CD8-positive, alpha-beta T cell (primary cell): ENCODE measurements at regions of chr9 and their contacts with region 1.

Region 1: GRCh38 chr9:24776226-24776625 is 230.5 kb upstream of the IZUMO3 start:
- DNase-seq: no peak
- ATAC-seq: no peak
- H3K4me3 ChIP-seq: no peak overlapping the region
- H3K4me3 Mint-ChIP-seq: no peak overlapping the region
- H3K27ac ChIP-seq: no peak overlapping the region
- H3K27ac Mint-ChIP-seq: no peak overlapping the region
- H3K4me1 ChIP-seq: no peaks in the 10 kb centered on the region
- H3K4me1 Mint-ChIP-seq: no peaks in the 10 kb centered on the region
- H3K27me3 ChIP-seq: no peaks in the 10 kb centered on the region
- H3K27me3 Mint-ChIP-seq: no peaks in the 10 kb centered on the region
- CTCF ChIP-seq: no peak

Region 2: GRCh38 chr9:24801344-24801743 is 25.1 kb after region 1 on chr9:
- CTCF ChIA-PET with region 1: no interaction called
- POLR2A ChIA-PET with region 1: no interaction called
- intact Hi-C with region 1: loop called in 1 of 2 experiments (anchors 2 kb)
- DNase-seq: no peak
- ATAC-seq: no peak
- H3K4me3 ChIP-seq: no peak overlapping the region
- H3K4me3 Mint-ChIP-seq: no peak overlapping the region
- H3K27ac ChIP-seq: no peak overlapping the region
- H3K27ac Mint-ChIP-seq: no peak overlapping the region
- H3K4me1 ChIP-seq: no peaks in the 10 kb centered on the region
- H3K4me1 Mint-ChIP-seq: no peaks in the 10 kb centered on the region
- H3K27me3 ChIP-seq: no peaks in the 10 kb centered on the region
- H3K27me3 Mint-ChIP-seq: no peaks in the 10 kb centered on the region
- CTCF ChIP-seq: no peak